Activated CD4-positive, alpha-beta T cell treated with anti-CD3 and anti-CD28 coated beads, Interleukin-2, amount 10 ng/mL, durations not matched to agents 24 days and 14 days (primary cell): ENCODE measurements at regions of chr3 and their contacts with region 1.

Region 1: DNA sequence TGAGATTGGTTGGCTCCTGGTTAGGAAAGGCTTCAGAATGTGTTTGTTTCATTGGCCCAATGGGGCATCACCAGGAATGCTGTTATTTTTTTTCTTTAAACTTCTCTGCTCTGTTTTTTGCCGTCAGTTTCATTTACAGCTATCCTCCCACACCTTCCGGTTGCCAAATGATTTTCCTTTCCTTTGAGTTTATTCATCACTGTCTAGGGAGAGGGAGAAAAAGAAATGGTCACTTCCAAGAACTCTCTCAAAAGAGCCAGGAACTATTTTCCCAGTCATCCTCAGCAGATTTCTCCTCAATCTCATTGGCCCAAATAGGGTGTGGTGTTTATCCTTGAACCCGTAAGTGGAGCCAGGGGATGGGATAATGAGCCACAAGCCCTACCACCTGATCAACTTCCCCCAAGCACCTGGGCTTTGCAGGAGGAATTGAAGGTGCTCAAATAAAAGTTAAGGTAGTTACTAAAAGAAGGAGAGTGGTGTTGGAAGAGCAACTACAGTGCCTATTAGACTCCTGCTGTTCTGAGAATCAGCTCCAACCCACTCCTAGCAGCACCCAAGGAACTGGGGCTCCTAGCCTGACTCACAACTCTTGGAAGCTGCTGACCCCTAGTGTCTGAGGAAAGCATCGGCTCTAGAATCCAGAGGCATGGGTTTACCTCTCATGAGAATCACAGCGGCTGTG is 183.8 kb upstream of the IL12A start:
- DNase-seq: peak; percentile 78
- H3K4me3 Mint-ChIP-seq: no peak overlapping the region
- H3K27ac Mint-ChIP-seq: no peak overlapping the region
- H3K4me1 Mint-ChIP-seq: no peaks in the 10 kb centered on the region
- H3K27me3 Mint-ChIP-seq: peaks cover 13% of the 10 kb centered on the region

Region 2: GRCh38 chr3:158845765-158846350 is 959.0 kb before region 1 on chr3:
- intact Hi-C with region 1: loop called (anchors 2 kb)
- DNase-seq: peak; percentile 76
- H3K4me3 Mint-ChIP-seq: no peak overlapping the region
- H3K27ac Mint-ChIP-seq: no peak overlapping the region
- H3K4me1 Mint-ChIP-seq: peaks cover 14% of the 10 kb centered on the region
- H3K27me3 Mint-ChIP-seq: no peaks in the 10 kb centered on the region

Region 3: GRCh38 chr3:159260049-159260662 is 544.7 kb before region 1 on chr3:
- intact Hi-C with region 1: loop called (anchors 1 kb)
- DNase-seq: peak; percentile 80
- H3K4me3 Mint-ChIP-seq: no peak overlapping the region
- H3K27ac Mint-ChIP-seq: no peak overlapping the region
- H3K4me1 Mint-ChIP-seq: no peaks in the 10 kb centered on the region
- H3K27me3 Mint-ChIP-seq: peaks cover 3% of the 10 kb centered on the region

Region 4: DNA sequence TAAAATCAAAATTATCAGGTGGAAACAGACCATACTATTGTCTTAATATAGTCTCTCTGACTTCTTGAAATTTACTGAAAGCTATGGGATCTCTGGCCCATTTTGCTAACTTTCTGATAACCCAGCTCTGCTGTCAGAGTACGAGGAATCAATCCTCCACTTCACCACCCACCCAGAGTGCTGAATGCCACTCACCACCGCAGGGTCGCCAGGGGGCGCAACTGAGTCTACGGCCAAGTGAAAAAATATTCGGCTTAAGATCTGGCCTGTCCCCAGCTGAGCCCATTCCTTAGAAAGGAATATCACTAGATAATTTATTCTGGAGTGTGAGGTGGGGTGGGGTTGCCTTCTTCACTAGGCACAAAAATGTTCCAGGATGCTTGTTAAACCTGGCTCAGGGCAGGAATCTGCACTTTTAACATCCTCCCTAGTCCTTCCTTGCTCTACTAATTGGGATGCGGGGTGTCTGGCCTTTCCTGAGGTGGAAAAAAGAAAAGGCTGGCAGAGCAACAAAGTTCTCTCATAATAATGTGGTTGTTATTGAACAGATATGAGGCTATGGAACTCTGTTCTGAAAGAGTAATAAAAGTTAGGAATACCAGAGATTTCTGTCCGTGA is 482.4 kb before region 1 on chr3:
- intact Hi-C with region 1: loop called (anchors 2 kb)
- DNase-seq: peak; percentile 68
- H3K4me3 Mint-ChIP-seq: no peak overlapping the region
- H3K27ac Mint-ChIP-seq: no peak overlapping the region
- H3K4me1 Mint-ChIP-seq: no peaks in the 10 kb centered on the region
- H3K27me3 Mint-ChIP-seq: no peaks in the 10 kb centered on the region